ENCODE measurements at regions of chr4 and their contacts with region 1.

Region 1: DNA sequence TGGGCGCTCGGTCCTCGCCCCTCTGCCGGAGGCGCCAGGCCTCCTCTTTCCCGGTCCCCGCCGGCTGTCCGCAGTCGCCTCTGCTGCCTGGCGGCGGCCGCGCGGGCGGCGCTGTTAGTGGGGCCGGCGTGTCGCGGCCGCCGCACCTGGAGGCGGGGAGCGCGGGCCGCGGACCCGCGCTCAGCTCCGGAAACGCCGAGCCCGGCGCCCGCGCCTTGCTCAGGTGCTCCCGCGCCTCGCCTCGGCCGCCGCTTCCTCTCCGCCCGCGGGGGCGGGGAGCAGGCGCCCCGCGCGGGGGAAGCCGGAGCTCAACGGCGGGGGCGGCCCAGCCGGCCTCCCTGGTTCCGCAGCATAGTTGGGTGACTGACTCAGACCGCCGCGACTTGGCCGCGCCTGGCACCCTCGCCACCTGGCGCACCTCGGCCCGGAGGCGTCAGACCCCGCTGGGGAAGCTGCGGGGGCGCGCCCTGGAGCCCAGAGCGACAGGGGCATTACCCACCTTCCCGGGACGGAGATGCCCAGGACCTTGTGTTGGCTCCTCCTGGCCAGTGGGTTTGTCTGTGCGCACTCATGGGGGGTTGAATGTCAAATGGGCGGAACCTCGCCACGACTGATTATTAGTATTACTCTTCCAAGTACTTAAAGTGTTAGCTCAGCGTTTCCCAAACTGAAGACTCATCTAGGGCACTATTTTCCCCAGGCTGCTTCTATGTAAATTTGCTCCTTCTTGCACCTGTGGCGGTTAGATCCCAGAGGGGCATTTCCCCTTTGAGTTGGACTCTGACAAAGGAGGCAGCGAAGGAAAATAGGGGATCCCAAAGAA is at the start of gene ARAP2:
- DNase-seq: peak; percentile 82
- H3K4me3 Mint-ChIP-seq: peak within 1 kb of the TSS; percentile 76
- H3K27ac Mint-ChIP-seq: peak within 1 kb of the TSS; percentile 85
- H3K4me1 Mint-ChIP-seq: no peaks in the 10 kb centered on the region
- H3K27me3 Mint-ChIP-seq: no peaks in the 10 kb centered on the region
- CTCF ChIP-seq: no peak
- total RNA-seq, gene ARAP2: 30.0 and 30.2 TPM in 2 replicates

Region 2: DNA sequence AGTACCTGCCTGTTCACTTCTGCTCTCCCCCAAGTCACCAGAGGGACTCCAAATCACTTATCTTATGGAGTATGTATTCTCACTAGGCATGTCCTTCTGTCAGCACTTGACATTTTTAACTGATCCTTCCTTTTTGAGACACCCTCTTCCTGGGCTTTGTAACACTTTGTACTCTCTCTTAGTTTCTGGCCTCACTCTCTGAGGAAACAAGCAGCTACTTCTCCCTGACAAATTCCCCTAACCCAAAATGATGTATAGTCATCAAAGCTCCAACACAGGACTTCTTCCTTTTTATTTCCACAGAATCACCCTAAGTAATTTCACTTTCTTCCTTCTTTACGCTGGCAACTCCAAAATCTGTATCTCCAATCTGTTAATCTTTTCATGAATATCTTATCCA is 102.0 kb before region 1 on chr4:
- CTCF ChIA-PET with region 1: no interaction called
- intact Hi-C with region 1: no loop called
- DNase-seq: no peak
- H3K4me3 Mint-ChIP-seq: no peak overlapping the region
- H3K27ac Mint-ChIP-seq: no peak overlapping the region
- H3K4me1 Mint-ChIP-seq: no peaks in the 10 kb centered on the region
- H3K27me3 Mint-ChIP-seq: no peaks in the 10 kb centered on the region
- CTCF ChIP-seq: no peak

Region 3: DNA sequence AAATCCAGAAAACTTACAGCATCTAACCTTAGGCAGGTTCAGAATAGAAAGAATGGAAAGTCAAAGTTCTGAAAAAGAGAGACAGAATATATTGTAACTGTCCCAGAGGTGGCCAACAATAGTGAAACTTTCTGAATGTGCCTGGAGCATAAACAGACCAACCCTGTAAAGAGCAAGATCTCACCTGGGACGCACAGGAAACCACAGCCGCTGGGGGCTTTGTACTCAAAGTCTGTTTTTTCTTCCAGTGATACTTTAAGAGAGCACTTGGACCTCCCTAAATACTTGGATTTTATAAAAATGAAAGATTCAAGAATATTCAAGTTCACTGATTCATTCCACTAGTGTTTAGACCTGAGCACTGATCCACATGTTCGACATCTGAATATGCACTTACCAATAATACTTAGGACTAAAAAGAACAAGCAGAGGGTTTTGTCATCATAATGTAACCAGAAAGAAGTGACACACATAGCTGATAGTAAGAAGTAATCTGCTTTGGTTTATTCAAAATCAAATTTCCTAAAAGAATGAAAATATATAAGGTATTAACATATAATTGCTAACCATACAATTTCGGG is 35.5 kb before region 1 on chr4:
- CTCF ChIA-PET with region 1: interaction called, 4 read pairs
- intact Hi-C with region 1: loop called (anchors 1 kb)
- DNase-seq: no peak
- H3K4me3 Mint-ChIP-seq: no peak overlapping the region
- H3K27ac Mint-ChIP-seq: no peak overlapping the region
- H3K4me1 Mint-ChIP-seq: peaks cover 25% of the 10 kb centered on the region
- H3K27me3 Mint-ChIP-seq: no peaks in the 10 kb centered on the region
- CTCF ChIP-seq: no peak

Region 4: DNA sequence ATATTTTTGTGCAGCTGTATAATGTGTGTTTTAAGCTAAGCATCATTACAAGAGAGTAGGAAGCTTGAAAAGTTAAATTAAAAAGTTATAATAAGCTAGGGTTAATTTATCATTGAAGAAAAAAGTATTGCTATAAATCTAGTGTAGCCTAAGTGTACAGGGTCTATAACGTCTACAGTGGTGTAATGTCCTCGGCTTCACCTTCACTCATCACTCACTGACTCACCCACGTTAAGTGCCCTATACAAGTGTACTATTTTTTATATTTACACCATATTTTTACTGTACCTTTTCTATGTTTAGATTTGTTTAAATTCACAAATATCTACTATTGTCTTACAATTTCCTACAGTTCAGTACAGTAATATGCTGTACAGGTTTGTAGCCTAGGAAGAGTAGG is 23.7 kb before region 1 on chr4:
- CTCF ChIA-PET with region 1: interaction called, 5 read pairs
- intact Hi-C with region 1: loop called (anchors 2 kb)
- DNase-seq: no peak
- H3K4me3 Mint-ChIP-seq: no peak overlapping the region
- H3K27ac Mint-ChIP-seq: no peak overlapping the region
- H3K4me1 Mint-ChIP-seq: peaks cover 17% of the 10 kb centered on the region
- H3K27me3 Mint-ChIP-seq: no peaks in the 10 kb centered on the region
- CTCF ChIP-seq: no peak

Region 5: GRCh38 chr4:36285784-36286480 is 41.5 kb after region 1 on chr4:
- CTCF ChIA-PET with region 1: no interaction called
- intact Hi-C with region 1: loop called (anchors 5 kb)
- DNase-seq: no peak
- H3K4me3 Mint-ChIP-seq: no peak overlapping the region
- H3K27ac Mint-ChIP-seq: no peak overlapping the region
- H3K4me1 Mint-ChIP-seq: peaks cover 19% of the 10 kb centered on the region
- H3K27me3 Mint-ChIP-seq: no peaks in the 10 kb centered on the region
- CTCF ChIP-seq: no peak

Region 6: GRCh38 chr4:36786519-36786918 is 542.1 kb after region 1 on chr4:
- CTCF ChIA-PET with region 1: no interaction called
- intact Hi-C with region 1: no loop called
- DNase-seq: no peak
- H3K4me3 Mint-ChIP-seq: no peak overlapping the region
- H3K27ac Mint-ChIP-seq: no peak overlapping the region
- H3K4me1 Mint-ChIP-seq: no peaks in the 10 kb centered on the region
- H3K27me3 Mint-ChIP-seq: no peaks in the 10 kb centered on the region
- CTCF ChIP-seq: no peak

Measured in Calu3 (cell line).